GM12878 (cell line): ENCODE measurements at regions of chr4 and their contacts with region 1.

Region 1: DNA sequence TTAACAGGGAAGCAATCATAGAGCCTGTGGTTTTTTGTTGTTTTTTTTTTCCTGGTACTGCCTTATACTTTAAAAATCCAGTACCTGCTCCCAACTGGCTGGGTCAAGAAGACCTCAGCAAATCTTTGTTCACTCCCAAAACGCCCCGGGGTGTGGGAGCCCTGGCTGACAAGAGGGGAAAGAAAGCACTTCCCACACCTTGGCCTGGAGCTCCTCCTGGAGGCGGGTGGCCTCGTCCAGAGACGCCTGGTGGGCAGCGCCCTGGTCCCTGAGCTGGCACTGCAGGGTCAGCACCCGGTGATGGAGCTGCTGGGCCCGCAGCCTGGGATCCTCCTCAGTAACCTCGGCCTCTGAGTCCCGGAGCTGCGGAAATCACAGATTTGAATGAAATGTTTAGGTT is 38.3 kb downstream of the C4orf50 start:
- DNase-seq: no peak
- ATAC-seq: 0 out of 3 replicates have a peak, but pooled peaks have one; percentile 17
- H3K4me3 ChIP-seq: no peak overlapping the region
- H3K27ac ChIP-seq: no peak overlapping the region
- H3K4me1 ChIP-seq: peaks cover 6% of the 10 kb centered on the region
- H3K27me3 ChIP-seq: peaks cover 0 to 5% of the 10 kb centered on the region in 2 experiments; a peak in 2 of 4 replicates
- CTCF ChIP-seq: peak; percentile 31 to 35 (median 31); a peak in 4 of 6 replicates
- EP300 ChIP-seq: no peak
- POLR2A ChIP-seq: no peak
- RAD21 ChIP-seq: peak; percentile 48

Region 2: GRCh38 chr4:5824635-5825034 is 155.3 kb before region 1 on chr4:
- CTCF ChIA-PET with region 1: interaction called, 3 read pairs
- POLR2A ChIA-PET with region 1: no interaction called
- RAD21 ChIA-PET with region 1: no interaction called
- SMC1A ChIA-PET with region 1: no interaction called
- in situ Hi-C with region 1: no loop called
- intact Hi-C with region 1: loop called (anchors 10 kb)
- DNase-seq: no peak
- ATAC-seq: peak; percentile 62
- H3K4me3 ChIP-seq: no peak overlapping the region
- H3K27ac ChIP-seq: no peak overlapping the region
- H3K4me1 ChIP-seq: peaks cover 16% of the 10 kb centered on the region
- H3K27me3 ChIP-seq: no peaks in the 10 kb centered on the region
- CTCF ChIP-seq: peak; percentile 54 to 61 (median 59)
- EP300 ChIP-seq: no peak
- POLR2A ChIP-seq: no peak
- RAD21 ChIP-seq: peak; percentile 55

Region 3: DNA sequence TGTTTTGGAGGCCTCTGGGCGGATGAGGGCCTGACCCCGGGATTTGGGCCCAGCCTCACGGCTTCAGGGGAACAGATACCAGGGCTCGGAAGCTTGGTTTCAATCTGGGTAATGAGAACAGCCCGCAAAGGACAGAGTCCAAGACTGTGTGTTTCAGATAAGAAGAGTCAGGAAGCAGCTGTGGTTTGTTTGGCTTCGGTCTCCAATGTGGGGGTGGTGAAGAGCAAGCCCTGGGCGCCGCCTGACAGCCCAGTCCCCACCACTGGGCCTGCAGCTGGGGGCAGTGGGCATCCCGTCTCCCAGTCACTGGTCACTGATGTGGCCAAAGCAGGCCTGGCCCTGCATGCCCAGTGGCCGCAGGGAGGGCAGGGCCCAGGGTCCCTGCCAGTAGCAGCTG is 298.8 kb after region 1 on chr4:
- CTCF ChIA-PET with region 1: no interaction called
- POLR2A ChIA-PET with region 1: no interaction called
- RAD21 ChIA-PET with region 1: no interaction called
- SMC1A ChIA-PET with region 1: no interaction called
- in situ Hi-C with region 1: no loop called
- intact Hi-C with region 1: no loop called
- DNase-seq: peak; percentile 42
- ATAC-seq: peak; percentile 94
- H3K4me3 ChIP-seq: no peak overlapping the region
- H3K27ac ChIP-seq: no peak overlapping the region
- H3K4me1 ChIP-seq: peaks cover 15% of the 10 kb centered on the region
- H3K27me3 ChIP-seq: no peaks in the 10 kb centered on the region; a peak in 1 of 4 replicates
- CTCF ChIP-seq: no peak
- EP300 ChIP-seq: peak in 1 of 2 experiments; percentile 39; a peak in 2 of 4 replicates
- POLR2A ChIP-seq: no peak
- RAD21 ChIP-seq: no peak